Mucosa of descending colon (tissue), 3 donors: ENCODE measurements at regions of chr7 and their contacts with region 1.

Region 1: DNA sequence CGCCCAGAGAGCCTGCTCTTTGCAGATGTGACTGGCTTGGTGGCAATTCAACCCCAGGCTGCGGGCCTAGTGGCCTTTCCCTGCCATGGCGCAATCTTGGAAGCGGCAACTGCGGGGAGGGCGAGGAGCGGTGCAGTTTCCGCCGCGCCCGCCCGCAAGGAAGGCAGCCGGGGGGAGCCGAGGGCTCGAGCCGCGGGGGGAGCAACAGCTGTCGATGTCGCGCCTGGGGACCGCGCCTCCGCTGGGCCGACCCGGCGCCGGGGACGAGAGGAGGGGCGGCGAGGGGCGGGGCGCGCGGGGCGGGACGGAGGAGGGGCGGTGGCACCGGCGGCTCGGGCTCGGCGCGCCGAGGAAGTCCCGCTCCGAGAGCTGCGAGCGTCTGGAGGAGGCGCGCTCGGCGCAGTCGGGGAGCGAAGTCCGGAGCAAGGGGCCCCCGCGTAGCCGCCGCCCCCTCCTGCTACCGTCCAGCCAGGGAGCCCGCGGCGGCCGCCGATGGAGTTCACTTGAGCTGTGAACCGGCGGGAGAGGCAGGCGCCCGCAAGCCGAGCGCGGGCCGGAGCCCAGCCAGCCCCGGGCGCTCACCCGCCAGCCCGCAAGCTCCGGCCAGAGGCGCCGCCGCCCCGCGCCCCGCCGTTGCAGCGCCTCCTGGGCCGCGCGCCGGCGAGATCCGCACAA is 438.1 kb upstream of the GALNT17 start:
- DNase-seq: peak; percentile 86 to 90 (median 87)
- ATAC-seq: peak; percentile 89
- H3K4me3 ChIP-seq: peak overlapping the region; percentile 71
- H3K4me1 ChIP-seq: no peaks in the 10 kb centered on the region
- CTCF ChIP-seq: peak; percentile 21

Region 2: DNA sequence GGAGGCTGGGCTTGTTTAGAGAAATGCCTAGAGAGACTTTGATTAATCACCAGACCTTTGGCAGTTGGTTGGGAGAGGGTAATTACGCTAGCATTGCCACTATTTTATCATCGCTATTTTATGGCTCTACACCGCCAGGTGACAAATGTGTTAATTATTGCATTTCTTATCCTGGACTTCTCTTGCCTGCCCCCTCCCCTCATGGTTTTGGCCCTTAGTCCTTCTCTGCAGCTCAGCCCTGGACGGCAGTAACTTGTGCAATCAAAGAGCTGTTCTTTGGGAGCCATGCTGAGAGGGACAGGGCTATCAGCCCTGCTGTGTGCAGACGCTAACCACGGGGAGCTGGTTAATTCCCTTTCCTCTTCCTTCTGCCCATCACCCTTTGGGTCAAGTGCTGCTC is 510.5 kb before region 1 on chr7:
- intact Hi-C with region 1: loop called in 1 of 2 experiments (anchors 10 kb)
- DNase-seq: peak in 2 of 3 donors; percentile 17 to 25
- ATAC-seq: peak; percentile 59
- H3K4me3 ChIP-seq: no peak overlapping the region
- H3K4me1 ChIP-seq: peaks cover 21% of the 10 kb centered on the region
- CTCF ChIP-seq: no peak

Region 3: GRCh38 chr7:70553364-70553763 is 140.5 kb before region 1 on chr7:
- intact Hi-C with region 1: no loop called
- DNase-seq: no peak
- ATAC-seq: no peak
- H3K4me3 ChIP-seq: no peak overlapping the region
- H3K4me1 ChIP-seq: no peaks in the 10 kb centered on the region
- CTCF ChIP-seq: no peak

Region 4: GRCh38 chr7:70942791-70943190 is 249.0 kb after region 1 on chr7:
- intact Hi-C with region 1: no loop called
- DNase-seq: no peak
- ATAC-seq: no peak
- H3K4me3 ChIP-seq: no peak overlapping the region
- H3K4me1 ChIP-seq: no peaks in the 10 kb centered on the region
- CTCF ChIP-seq: no peak